CD8-positive, alpha-beta T cell (primary cell): ENCODE measurements at regions of chr12 and their contacts with region 1.

Region 1: GRCh38 chr12:107402041-107403022 is 283.3 kb upstream of the PWP1 start:
- DNase-seq: peak; percentile 28 to 77 (median 62)
- ATAC-seq: peak; percentile 51
- H3K4me3 ChIP-seq: no peak overlapping the region
- H3K4me3 Mint-ChIP-seq: no peak overlapping the region
- H3K27ac ChIP-seq: no peak overlapping the region
- H3K27ac Mint-ChIP-seq: no peak overlapping the region
- H3K4me1 ChIP-seq: peaks cover 30% of the 10 kb centered on the region
- H3K4me1 Mint-ChIP-seq: peaks cover 40% of the 10 kb centered on the region
- H3K27me3 ChIP-seq: no peaks in the 10 kb centered on the region
- H3K27me3 Mint-ChIP-seq: no peaks in the 10 kb centered on the region
- CTCF ChIP-seq: peak; percentile 71

Region 2: DNA sequence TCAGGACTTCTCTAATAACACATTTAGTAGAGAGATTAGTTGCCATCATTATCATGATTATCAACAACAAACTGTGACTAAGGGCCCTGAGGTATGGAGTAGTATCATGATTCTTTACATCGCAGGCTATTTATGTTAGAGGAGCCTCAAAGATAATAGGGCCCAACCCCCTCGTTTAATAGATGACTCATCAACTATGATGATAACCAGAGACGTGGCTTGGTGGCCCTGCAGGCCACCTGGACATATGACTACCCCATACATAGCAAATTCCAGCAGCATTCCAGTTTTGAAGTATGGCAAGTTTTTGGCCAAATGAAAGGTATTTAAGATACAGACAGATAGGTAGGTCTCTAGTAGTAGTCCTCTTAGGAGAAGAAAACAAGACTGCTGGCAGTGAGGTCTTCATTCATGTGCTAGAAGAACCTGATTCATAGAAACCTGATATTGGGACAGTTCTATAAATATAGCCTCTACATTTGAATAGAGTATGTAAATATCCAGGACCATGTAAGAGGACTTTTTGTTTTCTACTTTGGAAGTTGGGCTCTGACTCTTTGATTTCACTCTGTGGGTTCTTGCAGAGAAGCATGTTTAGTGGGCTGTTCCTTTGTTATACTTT is 622.2 kb before region 1 on chr12:
- CTCF ChIA-PET with region 1: no interaction called
- POLR2A ChIA-PET with region 1: no interaction called
- intact Hi-C with region 1: no loop called
- DNase-seq: no peak
- ATAC-seq: no peak
- H3K4me3 ChIP-seq: no peak overlapping the region
- H3K4me3 Mint-ChIP-seq: no peak overlapping the region
- H3K27ac ChIP-seq: no peak overlapping the region
- H3K27ac Mint-ChIP-seq: no peak overlapping the region
- H3K4me1 ChIP-seq: peaks cover 17% of the 10 kb centered on the region
- H3K4me1 Mint-ChIP-seq: peaks cover 55% of the 10 kb centered on the region
- H3K27me3 ChIP-seq: no peaks in the 10 kb centered on the region
- H3K27me3 Mint-ChIP-seq: no peaks in the 10 kb centered on the region
- CTCF ChIP-seq: no peak

Region 3: GRCh38 chr12:107330831-107331431 is 71.4 kb before region 1 on chr12:
- CTCF ChIA-PET with region 1: interaction called, 15 read pairs
- POLR2A ChIA-PET with region 1: interaction called, 3 read pairs
- intact Hi-C with region 1: no loop called
- DNase-seq: peak in 3 of 9 experiments; percentile 21 to 51 (median 27)
- ATAC-seq: peak; percentile 41
- H3K4me3 ChIP-seq: no peak overlapping the region
- H3K4me3 Mint-ChIP-seq: no peak overlapping the region
- H3K27ac ChIP-seq: no peak overlapping the region
- H3K27ac Mint-ChIP-seq: peak overlapping the region; percentile 60
- H3K4me1 ChIP-seq: peaks cover 30% of the 10 kb centered on the region
- H3K4me1 Mint-ChIP-seq: peaks cover 86% of the 10 kb centered on the region
- H3K27me3 ChIP-seq: no peaks in the 10 kb centered on the region
- H3K27me3 Mint-ChIP-seq: no peaks in the 10 kb centered on the region
- CTCF ChIP-seq: no peak

Region 4: GRCh38 chr12:107372229-107372658 is 30.1 kb before region 1 on chr12:
- CTCF ChIA-PET with region 1: interaction called, 7 read pairs
- POLR2A ChIA-PET with region 1: interaction called, 5 read pairs
- intact Hi-C with region 1: loop called in 1 of 2 experiments (anchors 1 kb)
- DNase-seq: peak in 8 of 9 experiments; percentile 7 to 84 (median 41)
- ATAC-seq: peak; percentile 66
- H3K4me3 ChIP-seq: peak overlapping the region in 1 of 2 experiments; percentile 7
- H3K4me3 Mint-ChIP-seq: peak overlapping the region; percentile 72
- H3K27ac ChIP-seq: peak overlapping the region; percentile 43 to 62
- H3K27ac Mint-ChIP-seq: peak overlapping the region; percentile 89
- H3K4me1 ChIP-seq: peaks cover 74% of the 10 kb centered on the region
- H3K4me1 Mint-ChIP-seq: peaks cover 83% of the 10 kb centered on the region
- H3K27me3 ChIP-seq: no peaks in the 10 kb centered on the region
- H3K27me3 Mint-ChIP-seq: no peaks in the 10 kb centered on the region
- CTCF ChIP-seq: no peak

Region 5: GRCh38 chr12:107384645-107385044 is 17.7 kb before region 1 on chr12:
- CTCF ChIA-PET with region 1: interaction called, 14 read pairs
- POLR2A ChIA-PET with region 1: interaction called, 4 read pairs
- intact Hi-C with region 1: no loop called
- DNase-seq: no peak
- ATAC-seq: no peak
- H3K4me3 ChIP-seq: no peak overlapping the region
- H3K4me3 Mint-ChIP-seq: no peak overlapping the region
- H3K27ac ChIP-seq: no peak overlapping the region
- H3K27ac Mint-ChIP-seq: no peak overlapping the region
- H3K4me1 ChIP-seq: peaks cover 21% of the 10 kb centered on the region
- H3K4me1 Mint-ChIP-seq: peaks cover 54% of the 10 kb centered on the region
- H3K27me3 ChIP-seq: no peaks in the 10 kb centered on the region
- H3K27me3 Mint-ChIP-seq: no peaks in the 10 kb centered on the region
- CTCF ChIP-seq: no peak

Region 6: DNA sequence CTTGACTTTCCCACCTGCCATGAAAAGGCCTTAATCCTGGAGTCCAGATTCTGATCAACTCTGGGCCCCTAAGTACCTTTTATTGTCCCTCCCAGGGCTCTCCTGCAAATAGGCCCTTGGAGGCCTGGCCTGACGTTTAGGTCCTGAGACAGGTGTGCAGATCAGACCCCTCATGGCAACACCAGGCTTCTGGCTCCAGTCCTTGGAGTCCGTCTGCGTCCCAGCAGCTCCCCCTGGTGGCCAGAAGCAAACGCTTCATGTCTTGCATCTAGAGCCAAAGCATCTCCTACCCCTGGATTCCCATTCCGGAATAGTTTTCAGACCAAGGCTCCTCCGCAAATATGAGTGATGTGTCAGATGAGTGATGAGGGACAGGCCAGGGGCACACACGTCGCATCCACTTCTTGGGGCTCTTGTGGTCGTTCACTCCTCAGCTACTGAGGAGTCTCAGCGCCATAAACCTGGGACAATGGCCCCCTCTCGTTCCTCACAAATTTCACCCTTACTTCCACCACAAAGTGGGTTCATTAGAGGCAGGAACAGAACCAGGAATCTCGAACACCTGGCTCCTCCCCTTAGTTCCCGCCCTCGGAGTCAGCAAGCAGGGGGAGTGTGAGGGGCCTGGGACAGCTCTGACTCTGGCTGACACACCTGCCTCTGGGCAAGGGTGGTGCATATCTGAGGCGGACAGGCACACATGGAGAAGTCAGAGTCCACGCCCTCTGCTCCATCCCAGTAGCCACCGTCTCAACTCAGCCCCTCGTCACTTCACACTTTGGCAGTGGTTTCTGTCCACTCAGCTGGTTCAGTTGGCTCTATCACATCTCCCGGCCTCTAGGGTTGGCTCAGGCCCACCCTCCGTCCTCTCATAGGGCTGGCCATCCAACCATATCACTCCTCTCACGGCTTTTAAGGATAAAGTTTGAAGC is 205.4 kb after region 1 on chr12:
- CTCF ChIA-PET with region 1: interaction called, 23 read pairs
- POLR2A ChIA-PET with region 1: no interaction called
- intact Hi-C with region 1: loop called (anchors 1 to 5 kb)
- DNase-seq: peak; percentile 57 to 89 (median 83)
- ATAC-seq: peak; percentile 84
- H3K4me3 ChIP-seq: no peak overlapping the region
- H3K4me3 Mint-ChIP-seq: no peak overlapping the region
- H3K27ac ChIP-seq: no peak overlapping the region
- H3K27ac Mint-ChIP-seq: no peak overlapping the region
- H3K4me1 ChIP-seq: no peaks in the 10 kb centered on the region
- H3K4me1 Mint-ChIP-seq: no peaks in the 10 kb centered on the region
- H3K27me3 ChIP-seq: no peaks in the 10 kb centered on the region
- H3K27me3 Mint-ChIP-seq: no peaks in the 10 kb centered on the region
- CTCF ChIP-seq: peak; percentile 94

Region 7: DNA sequence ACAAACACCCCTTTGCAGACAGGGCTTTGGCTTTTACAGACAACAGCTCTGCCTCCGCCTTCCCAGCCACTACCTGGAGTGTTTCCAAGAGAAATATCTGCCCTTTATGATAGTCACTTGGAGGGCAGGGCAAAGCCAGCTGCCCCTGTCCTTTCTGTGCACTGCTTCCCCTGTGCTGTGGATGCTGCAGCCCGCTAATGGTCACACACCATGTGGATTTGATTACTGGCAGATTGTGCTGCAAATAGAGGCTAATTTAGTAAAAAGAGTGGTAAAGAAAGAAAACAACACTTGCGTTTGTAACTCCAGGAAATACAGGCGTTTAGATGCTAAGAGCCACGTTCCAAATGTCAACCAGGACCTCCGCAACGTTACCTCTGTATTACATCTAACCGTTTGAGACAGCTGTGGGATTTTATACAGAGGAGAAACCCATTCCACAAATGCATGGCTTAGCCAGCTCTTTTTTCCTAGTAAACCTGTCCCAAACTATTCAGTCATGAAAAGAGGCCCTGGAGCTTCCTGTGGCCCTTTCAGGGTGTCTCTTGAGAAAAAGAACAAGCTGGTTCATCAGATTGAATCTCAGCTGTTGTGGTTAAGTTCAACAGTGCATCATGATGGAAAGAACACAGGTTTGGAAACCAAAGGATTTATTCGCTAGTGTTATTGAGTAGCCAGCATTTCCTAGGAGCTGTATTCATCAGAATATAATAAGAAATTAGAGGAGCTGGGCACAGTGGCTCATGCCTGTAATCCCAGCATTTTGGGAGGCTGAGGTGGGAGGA is 253.1 kb after region 1 on chr12:
- CTCF ChIA-PET with region 1: no interaction called
- POLR2A ChIA-PET with region 1: no interaction called
- intact Hi-C with region 1: no loop called
- DNase-seq: no peak
- ATAC-seq: no peak
- H3K4me3 ChIP-seq: no peak overlapping the region
- H3K4me3 Mint-ChIP-seq: no peak overlapping the region
- H3K27ac ChIP-seq: no peak overlapping the region
- H3K27ac Mint-ChIP-seq: no peak overlapping the region
- H3K4me1 ChIP-seq: no peaks in the 10 kb centered on the region
- H3K4me1 Mint-ChIP-seq: no peaks in the 10 kb centered on the region
- H3K27me3 ChIP-seq: no peaks in the 10 kb centered on the region
- H3K27me3 Mint-ChIP-seq: no peaks in the 10 kb centered on the region
- CTCF ChIP-seq: no peak